PC-9 (cell line): ENCODE measurements at regions of chr3 and their contacts with region 1.

Region 1: DNA sequence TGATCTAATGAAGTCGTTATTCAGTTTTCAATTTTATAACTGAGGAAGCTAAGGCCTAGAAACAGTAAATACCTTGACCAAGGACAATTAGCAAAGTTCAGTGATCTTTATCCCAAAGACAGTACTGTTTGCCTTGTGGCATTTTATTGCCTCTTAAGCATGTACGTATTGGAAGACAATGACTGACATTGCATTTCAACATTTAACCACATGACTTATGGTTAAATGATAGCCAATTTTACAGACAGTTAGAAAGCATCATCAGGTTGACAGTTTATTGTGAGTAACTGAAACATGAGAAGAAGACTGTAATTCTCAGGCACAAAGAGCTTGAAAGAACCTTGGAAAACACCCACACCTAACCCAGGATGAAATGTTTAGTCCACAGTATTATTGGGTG is 390.8 kb upstream of the ZNF385D start:
- DNase-seq: no peak
- H3K4me3 ChIP-seq: no peak overlapping the region
- H3K27ac ChIP-seq: no peak overlapping the region
- H3K4me1 ChIP-seq: no peaks in the 10 kb centered on the region
- H3K27me3 ChIP-seq: no peaks in the 10 kb centered on the region
- CTCF ChIP-seq: no peak

Region 2: DNA sequence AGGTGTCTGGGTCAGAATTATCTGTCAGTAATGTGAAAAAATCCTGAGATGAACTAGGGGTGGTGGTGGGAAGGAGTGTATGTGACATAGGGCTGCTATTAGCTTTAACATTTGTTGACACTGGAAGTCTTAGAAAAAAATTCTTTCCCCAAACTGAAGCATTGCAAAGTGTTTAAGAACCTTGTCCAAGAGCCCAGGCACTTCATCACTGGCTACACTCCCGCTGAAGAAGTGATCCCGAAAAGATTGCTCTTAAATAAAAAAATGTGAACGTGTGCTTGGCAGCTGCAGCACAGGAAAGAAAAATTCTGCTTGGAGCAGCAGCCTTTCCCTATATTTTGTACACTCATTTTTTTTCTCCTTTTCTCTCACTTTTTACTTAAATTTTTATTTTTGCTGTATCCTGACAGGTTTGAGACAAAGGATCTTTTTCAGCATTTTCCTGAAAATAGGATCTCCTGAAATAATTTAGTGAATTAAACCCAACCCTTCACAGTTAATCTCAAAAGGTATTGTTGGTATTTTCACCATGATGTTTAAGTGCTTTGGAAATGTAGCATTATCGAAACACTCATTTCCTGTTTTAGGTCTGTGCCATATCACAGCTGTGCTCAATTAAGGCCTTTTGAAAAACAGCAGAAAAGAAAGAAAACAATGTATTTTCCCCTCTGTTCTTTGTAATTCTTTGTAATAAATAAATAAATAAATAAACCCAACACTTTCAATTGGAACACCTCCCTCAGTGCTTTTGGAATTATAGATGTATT is 868.3 kb before region 1 on chr3:
- CTCF ChIA-PET with region 1: no interaction called
- POLR2A ChIA-PET with region 1: no interaction called
- intact Hi-C with region 1: no loop called
- DNase-seq: no peak
- H3K4me3 ChIP-seq: no peak overlapping the region
- H3K27ac ChIP-seq: no peak overlapping the region
- H3K4me1 ChIP-seq: no peaks in the 10 kb centered on the region
- H3K27me3 ChIP-seq: no peaks in the 10 kb centered on the region
- CTCF ChIP-seq: no peak

Region 3: DNA sequence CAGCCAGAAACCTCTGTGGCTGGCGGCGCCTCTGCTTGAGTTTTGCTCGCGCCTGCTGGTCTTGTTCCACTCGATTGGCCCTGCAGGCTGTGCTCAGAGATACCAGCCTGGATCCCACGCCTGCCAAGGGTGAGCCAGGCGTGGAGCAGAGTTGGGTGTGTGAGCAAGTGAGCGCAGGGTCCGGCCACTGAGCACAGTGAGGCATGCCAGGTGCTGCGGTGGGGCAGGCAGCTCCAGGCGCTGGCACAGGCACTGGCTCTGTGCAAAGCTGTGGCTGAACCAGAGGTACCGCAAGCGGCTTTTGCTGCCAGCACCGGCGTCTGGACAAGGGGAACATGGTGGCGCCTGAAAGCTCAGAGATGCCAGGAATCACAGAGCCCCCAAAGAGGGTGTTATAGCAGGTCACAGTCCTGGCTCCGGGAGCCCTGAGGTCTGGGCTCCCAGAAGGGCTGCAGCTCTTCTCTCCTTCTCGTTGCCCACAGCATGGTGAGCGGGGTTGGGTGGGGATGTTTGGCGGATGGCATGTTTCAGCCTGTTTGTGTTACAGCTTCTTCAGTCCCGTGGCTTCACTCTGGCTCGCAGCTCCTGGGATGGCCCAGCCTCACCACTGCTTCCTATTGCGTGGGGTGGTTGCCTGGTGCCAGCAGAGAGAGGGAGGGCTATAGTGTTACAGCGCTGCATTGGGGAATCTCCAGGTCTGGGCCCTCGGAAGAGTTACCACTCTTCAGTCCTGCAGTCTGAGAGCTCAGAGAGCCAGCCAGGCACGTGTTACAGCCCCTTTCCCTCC is 1877.2 kb after region 1 on chr3:
- CTCF ChIA-PET with region 1: no interaction called
- POLR2A ChIA-PET with region 1: interaction called, 10 read pairs
- intact Hi-C with region 1: no loop called
- DNase-seq: no peak
- H3K4me3 ChIP-seq: no peak overlapping the region
- H3K27ac ChIP-seq: no peak overlapping the region
- H3K4me1 ChIP-seq: no peaks in the 10 kb centered on the region
- H3K27me3 ChIP-seq: no peaks in the 10 kb centered on the region
- CTCF ChIP-seq: no peak